GM12878 (cell line): ENCODE measurements at regions of chr9 and their contacts with region 1.

Region 1: GRCh38 chr9:3467593-3468219 is 58.1 kb downstream of the RFX3 start:
- DNase-seq: no peak
- ATAC-seq: peak; percentile 99
- H3K4me3 ChIP-seq: no peak overlapping the region
- H3K27ac ChIP-seq: no peak overlapping the region
- H3K4me1 ChIP-seq: no peaks in the 10 kb centered on the region
- H3K27me3 ChIP-seq: no peaks in the 10 kb centered on the region
- CTCF ChIP-seq: peak; percentile 99 to 100 (median 100)
- EP300 ChIP-seq: no peak
- POLR2A ChIP-seq: no peak
- RAD21 ChIP-seq: peak; percentile 97

Region 2: GRCh38 chr9:3478549-3478953 is 10.8 kb after region 1 on chr9:
- CTCF ChIA-PET with region 1: interaction called, 10 read pairs
- POLR2A ChIA-PET with region 1: interaction called, 4 read pairs
- RAD21 ChIA-PET with region 1: interaction called, 16 read pairs
- SMC1A ChIA-PET with region 1: interaction called, 42 read pairs
- in situ Hi-C with region 1: no loop called
- intact Hi-C with region 1: no loop called
- DNase-seq: peak; percentile 74
- ATAC-seq: peak; percentile 60
- H3K4me3 ChIP-seq: peak overlapping the region; percentile 48; the same call in 1 of the 2 replicates
- H3K27ac ChIP-seq: peak overlapping the region; percentile 97
- H3K4me1 ChIP-seq: peaks cover 54% of the 10 kb centered on the region
- H3K27me3 ChIP-seq: no peaks in the 10 kb centered on the region
- CTCF ChIP-seq: no peak
- EP300 ChIP-seq: peak in 1 of 2 experiments; percentile 10; a peak in 1 of 4 replicates
- POLR2A ChIP-seq: no peak
- RAD21 ChIP-seq: no peak

Region 3: GRCh38 chr9:3525836-3526164 is 58.1 kb after region 1 on chr9 and contains the start of gene RFX3:
- CTCF ChIA-PET with region 1: interaction called, 37 read pairs
- POLR2A ChIA-PET with region 1: interaction called, 81 read pairs
- RAD21 ChIA-PET with region 1: interaction called, 180 read pairs
- SMC1A ChIA-PET with region 1: interaction called, 131 read pairs
- in situ Hi-C with region 1: no loop called
- intact Hi-C with region 1: loop called (anchors 5 kb)
- DNase-seq: peak; percentile 78
- ATAC-seq: peak; percentile 64
- H3K4me3 ChIP-seq: peak within 1 kb of the TSS; percentile 95
- H3K27ac ChIP-seq: peak within 1 kb of the TSS; percentile 96
- H3K4me1 ChIP-seq: no peaks in the 10 kb centered on the region; the same call in 1 of the 2 replicates
- H3K27me3 ChIP-seq: no peaks in the 10 kb centered on the region
- CTCF ChIP-seq: no peak
- EP300 ChIP-seq: peak; percentile 33 to 93; a peak in 3 of 4 replicates
- POLR2A ChIP-seq: no peak
- RAD21 ChIP-seq: 0 out of 2 replicates have a peak, but pooled peaks have one; percentile 1
- polyA plus RNA-seq, gene RFX3: 1.2 to 1.8 TPM

Region 4: GRCh38 chr9:3719286-3719685 is 251.6 kb after region 1 on chr9:
- CTCF ChIA-PET with region 1: no interaction called
- POLR2A ChIA-PET with region 1: no interaction called
- RAD21 ChIA-PET with region 1: interaction called, 10 read pairs
- SMC1A ChIA-PET with region 1: interaction called, 5 read pairs
- in situ Hi-C with region 1: no loop called
- intact Hi-C with region 1: no loop called
- DNase-seq: no peak
- ATAC-seq: no peak
- H3K4me3 ChIP-seq: no peak overlapping the region
- H3K27ac ChIP-seq: no peak overlapping the region
- H3K4me1 ChIP-seq: no peaks in the 10 kb centered on the region
- H3K27me3 ChIP-seq: no peaks in the 10 kb centered on the region
- CTCF ChIP-seq: no peak
- EP300 ChIP-seq: no peak
- POLR2A ChIP-seq: no peak
- RAD21 ChIP-seq: no peak

Region 5: GRCh38 chr9:3857673-3858072 is 390.0 kb after region 1 on chr9:
- CTCF ChIA-PET with region 1: no interaction called
- POLR2A ChIA-PET with region 1: no interaction called
- RAD21 ChIA-PET with region 1: no interaction called
- SMC1A ChIA-PET with region 1: no interaction called
- in situ Hi-C with region 1: no loop called
- intact Hi-C with region 1: loop called (anchors 10 kb)
- DNase-seq: no peak
- ATAC-seq: no peak
- H3K4me3 ChIP-seq: no peak overlapping the region
- H3K27ac ChIP-seq: no peak overlapping the region
- H3K4me1 ChIP-seq: no peaks in the 10 kb centered on the region
- H3K27me3 ChIP-seq: no peaks in the 10 kb centered on the region
- CTCF ChIP-seq: no peak
- EP300 ChIP-seq: no peak
- POLR2A ChIP-seq: no peak
- RAD21 ChIP-seq: no peak

Region 6: DNA sequence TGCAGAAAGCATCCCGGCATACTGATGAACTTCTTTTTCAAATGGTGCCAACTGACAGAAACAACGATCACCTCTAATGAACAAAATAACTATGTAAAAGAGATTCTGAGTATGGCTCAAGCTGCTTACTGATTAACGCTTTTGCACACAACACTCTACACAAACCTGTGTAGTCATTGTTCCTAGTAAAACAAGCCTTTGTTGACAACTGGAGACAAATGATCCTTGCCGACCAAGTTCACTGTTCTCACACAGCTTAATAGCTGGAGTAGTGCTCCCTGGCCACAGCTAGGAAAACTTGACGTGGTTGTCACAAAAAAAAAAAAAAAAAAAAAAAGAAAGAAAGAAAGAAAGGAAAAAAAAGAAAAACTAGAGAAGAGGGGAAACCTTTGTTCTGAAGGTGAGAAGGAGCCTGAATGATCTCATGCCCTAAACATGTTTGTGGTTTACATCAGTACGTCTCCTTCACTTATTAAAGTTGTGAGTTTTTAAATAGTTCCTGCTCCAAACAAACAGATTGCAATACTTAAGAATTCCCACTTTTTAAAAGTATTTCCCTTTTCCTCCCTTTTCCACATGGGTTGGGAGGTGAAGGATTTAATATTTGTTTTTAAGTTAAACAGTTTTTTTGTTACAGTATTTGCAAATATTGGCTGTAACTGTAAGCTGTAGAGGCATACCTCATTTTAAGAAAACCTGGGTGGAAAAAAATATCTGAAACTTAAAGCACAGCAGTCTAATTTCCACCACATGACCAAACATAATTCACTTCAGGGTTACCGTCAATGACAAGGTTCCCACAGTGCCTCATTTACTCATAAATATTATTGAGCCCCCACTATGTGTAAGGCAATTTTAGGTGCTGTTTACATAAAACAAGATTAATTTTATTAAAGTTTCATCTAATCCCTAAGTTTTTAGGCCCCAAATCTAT is 768.4 kb after region 1 on chr9:
- CTCF ChIA-PET with region 1: interaction called, 3 read pairs
- POLR2A ChIA-PET with region 1: no interaction called
- RAD21 ChIA-PET with region 1: no interaction called
- SMC1A ChIA-PET with region 1: no interaction called
- in situ Hi-C with region 1: no loop called
- intact Hi-C with region 1: loop called (anchors 10 kb)
- DNase-seq: no peak
- ATAC-seq: peak; percentile 69
- H3K4me3 ChIP-seq: no peak overlapping the region
- H3K27ac ChIP-seq: no peak overlapping the region
- H3K4me1 ChIP-seq: no peaks in the 10 kb centered on the region; the same call in 1 of the 2 replicates
- H3K27me3 ChIP-seq: no peaks in the 10 kb centered on the region; a peak in 1 of 4 replicates
- CTCF ChIP-seq: no peak
- EP300 ChIP-seq: no peak
- POLR2A ChIP-seq: no peak
- RAD21 ChIP-seq: no peak